Activated CD4-positive, alpha-beta T cell treated with anti-CD3 and anti-CD28 coated beads, Interleukin-2, amount 10 ng/mL, durations not matched to agents 24 days and 14 days (primary cell): ENCODE measurements at regions of chr3 and their contacts with region 1.

Region 1: DNA sequence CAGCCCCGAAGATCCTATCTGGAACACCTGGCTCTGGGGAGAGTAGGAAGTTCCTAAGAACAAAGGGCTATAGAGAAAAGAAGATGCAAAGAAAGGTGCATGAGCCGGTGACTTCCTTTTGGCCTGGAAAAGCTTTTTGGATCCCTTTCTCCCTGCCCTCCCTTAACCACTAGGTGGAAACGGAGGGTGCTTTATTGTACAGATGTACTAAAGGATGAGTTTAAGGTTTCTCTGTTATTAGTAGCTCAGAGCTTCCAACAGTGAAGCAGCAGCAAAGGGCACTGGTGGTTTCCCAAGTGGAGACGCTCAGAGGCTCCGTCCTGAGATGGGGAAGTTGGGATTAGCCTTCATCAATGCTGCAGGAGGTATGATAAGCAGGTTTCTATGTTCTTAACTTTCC is 5.9 kb upstream of the ADGRG7 start:
- DNase-seq: no peak
- H3K4me3 Mint-ChIP-seq: peak overlapping the region; percentile 72
- H3K27ac Mint-ChIP-seq: peak overlapping the region; percentile 83
- H3K4me1 Mint-ChIP-seq: peaks cover 27% of the 10 kb centered on the region
- H3K27me3 Mint-ChIP-seq: peaks cover under 1% of the 10 kb centered on the region

Region 2: DNA sequence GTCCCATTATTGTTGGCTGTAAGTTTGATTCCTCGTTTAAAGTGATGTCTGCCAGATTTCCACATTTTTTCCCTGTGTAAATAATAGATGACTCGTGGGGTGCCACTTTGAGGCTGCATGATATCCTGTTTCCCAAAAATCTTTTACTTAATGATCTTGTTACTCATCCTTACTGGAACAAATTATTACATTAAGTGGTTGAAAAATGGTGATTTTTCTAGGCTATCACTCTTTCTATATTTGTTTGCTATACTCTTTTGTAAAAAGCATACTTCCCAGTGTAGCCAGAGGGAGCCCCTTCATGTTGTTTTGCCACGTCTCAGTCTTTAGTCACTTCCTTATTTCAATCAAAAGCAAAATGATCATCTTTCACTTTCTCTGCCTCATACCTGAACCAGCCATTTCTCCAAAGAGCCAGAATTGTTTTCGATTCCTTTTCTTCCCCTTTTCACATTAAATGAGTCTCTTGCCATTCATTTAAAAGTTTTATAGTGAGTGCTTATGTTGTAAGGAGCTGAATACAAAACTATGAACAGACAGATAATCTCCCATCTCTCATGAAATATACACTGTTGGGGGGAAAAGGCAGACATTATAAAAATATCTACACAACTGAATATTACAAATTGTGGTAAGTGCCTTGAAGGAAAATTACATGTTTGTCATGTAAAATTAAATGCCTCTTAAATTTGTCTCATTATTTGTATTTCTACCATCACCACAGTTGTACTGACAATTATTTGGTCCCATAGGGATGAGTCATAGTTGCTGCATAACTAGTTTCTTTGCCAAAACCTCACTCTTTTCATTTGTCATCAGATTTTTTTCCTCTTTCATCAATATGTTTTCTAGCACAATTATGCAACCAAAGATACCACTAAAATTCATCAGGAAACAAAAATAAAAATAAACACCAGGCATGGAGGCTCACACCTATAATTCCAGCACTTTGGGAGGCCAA is 47.5 kb after region 1 on chr3:
- intact Hi-C with region 1: loop called (anchors 1 kb)
- DNase-seq: peak; percentile 73
- H3K4me3 Mint-ChIP-seq: peak overlapping the region; percentile 58
- H3K27ac Mint-ChIP-seq: peak overlapping the region; percentile 75
- H3K4me1 Mint-ChIP-seq: peaks cover 12% of the 10 kb centered on the region
- H3K27me3 Mint-ChIP-seq: peaks cover 2% of the 10 kb centered on the region

Region 3: DNA sequence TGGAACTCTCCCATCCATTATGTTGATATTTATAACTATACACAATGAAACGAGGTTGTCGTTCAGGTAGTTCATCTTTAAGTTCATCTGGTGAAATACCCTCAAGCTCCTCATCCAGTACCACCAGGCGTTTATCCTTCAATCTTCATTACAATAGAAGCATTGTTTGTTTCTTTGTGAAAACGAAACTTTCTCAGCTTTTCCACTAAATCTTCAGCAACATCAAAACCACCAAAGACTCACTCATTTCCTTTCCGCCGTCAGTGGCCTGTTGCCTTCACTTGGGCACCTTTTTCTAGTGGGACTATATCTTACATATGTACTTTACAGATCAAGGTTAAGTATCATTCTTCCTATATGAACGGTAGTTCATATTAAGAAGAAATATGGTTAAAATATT is 61.8 kb after region 1 on chr3:
- intact Hi-C with region 1: loop called (anchors 5 kb)
- DNase-seq: peak; percentile 86
- H3K4me3 Mint-ChIP-seq: peak overlapping the region; percentile 59
- H3K27ac Mint-ChIP-seq: peak overlapping the region; percentile 81
- H3K4me1 Mint-ChIP-seq: peaks cover 27% of the 10 kb centered on the region
- H3K27me3 Mint-ChIP-seq: no peaks in the 10 kb centered on the region